ENCODE measurements at regions of chr12 and their contacts with region 1.

Region 1: GRCh38 chr12:94560431-94561221 is 89.7 kb downstream of the TMCC3 start:
- DNase-seq: peak; percentile 61
- H3K4me3 ChIP-seq: no peak overlapping the region
- H3K27ac ChIP-seq: peak overlapping the region in 3 of 4 donors; percentile 35 to 53 (median 46)
- H3K4me1 ChIP-seq: peaks cover 0 to 46% (median 22%) of the 10 kb centered on the region in 4 donors
- H3K27me3 ChIP-seq: no peaks in the 10 kb centered on the region
- CTCF ChIP-seq: no peak
- EP300 ChIP-seq: no peak
- POLR2A ChIP-seq: no peak

Region 2: DNA sequence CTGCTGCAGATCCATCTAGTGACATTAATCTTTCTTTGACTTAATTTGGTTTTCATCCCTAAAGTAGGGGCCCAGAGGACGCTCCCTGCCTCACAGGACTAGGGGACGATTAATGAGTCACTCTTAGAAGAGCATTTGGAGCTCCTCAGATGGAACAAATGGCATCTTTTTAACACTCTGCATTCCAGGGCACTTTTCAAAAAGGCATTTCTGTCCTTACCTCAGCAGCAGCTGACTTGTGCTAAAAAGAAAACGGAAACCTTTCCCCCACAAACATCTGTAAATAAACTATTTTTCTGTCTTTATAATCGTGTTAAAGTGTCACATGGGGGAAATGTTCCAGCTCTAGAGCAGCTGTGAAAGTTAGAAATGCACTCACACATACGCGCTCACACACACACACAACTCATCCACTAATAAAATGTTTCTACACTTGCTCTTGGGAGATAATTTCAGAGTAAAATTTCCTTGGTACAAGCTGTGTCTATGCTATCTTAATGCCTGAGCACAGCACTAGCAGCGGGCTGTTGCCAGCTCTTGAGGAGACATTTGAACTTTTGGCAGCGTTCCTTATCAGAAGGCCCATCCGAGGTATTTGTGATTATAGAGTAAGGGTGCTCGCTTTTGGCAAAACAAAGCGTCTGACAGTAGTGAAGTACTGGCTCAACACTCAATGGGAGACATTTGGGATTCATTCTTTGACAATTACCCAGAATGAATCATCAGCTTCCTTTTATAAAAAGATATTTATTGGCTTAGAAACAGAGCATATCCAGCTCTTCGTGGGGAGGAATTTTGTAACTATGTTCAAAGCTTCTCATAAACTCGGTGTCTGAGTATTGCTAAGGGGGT is 270.9 kb before region 1 on chr12:
- in situ Hi-C with region 1: no loop called
- intact Hi-C with region 1: no loop called
- DNase-seq: no peak
- H3K4me3 ChIP-seq: no peak overlapping the region
- H3K27ac ChIP-seq: peak overlapping the region; percentile 8 to 45 (median 37)
- H3K4me1 ChIP-seq: peaks cover 4 to 22% (median 13%) of the 10 kb centered on the region in 4 donors
- H3K27me3 ChIP-seq: no peaks in the 10 kb centered on the region
- CTCF ChIP-seq: no peak
- EP300 ChIP-seq: no peak
- POLR2A ChIP-seq: no peak

Region 3: DNA sequence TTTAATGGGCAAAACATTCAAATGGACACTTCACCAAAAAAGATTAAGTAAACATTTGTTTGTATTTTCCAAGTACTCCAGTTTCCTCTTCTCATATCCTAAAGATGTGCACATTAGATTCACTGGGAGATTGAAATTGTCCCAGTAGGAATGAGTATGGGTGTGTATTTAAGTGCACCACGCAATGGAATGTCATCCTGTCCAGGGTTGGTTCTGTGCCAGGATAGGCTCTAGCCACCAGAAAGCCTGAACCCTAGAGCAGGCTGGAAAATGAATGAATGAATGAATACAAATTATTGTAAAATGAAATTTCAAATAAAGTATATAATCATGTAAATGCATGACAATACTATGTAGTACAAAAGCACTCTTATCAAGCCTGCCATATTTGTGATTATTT is 115.0 kb before region 1 on chr12:
- in situ Hi-C with region 1: no loop called
- intact Hi-C with region 1: no loop called
- DNase-seq: no peak
- H3K4me3 ChIP-seq: no peak overlapping the region
- H3K27ac ChIP-seq: no peak overlapping the region
- H3K4me1 ChIP-seq: no peaks in the 10 kb centered on the region
- H3K27me3 ChIP-seq: no peaks in the 10 kb centered on the region
- CTCF ChIP-seq: no peak
- EP300 ChIP-seq: no peak
- POLR2A ChIP-seq: no peak

Region 4: DNA sequence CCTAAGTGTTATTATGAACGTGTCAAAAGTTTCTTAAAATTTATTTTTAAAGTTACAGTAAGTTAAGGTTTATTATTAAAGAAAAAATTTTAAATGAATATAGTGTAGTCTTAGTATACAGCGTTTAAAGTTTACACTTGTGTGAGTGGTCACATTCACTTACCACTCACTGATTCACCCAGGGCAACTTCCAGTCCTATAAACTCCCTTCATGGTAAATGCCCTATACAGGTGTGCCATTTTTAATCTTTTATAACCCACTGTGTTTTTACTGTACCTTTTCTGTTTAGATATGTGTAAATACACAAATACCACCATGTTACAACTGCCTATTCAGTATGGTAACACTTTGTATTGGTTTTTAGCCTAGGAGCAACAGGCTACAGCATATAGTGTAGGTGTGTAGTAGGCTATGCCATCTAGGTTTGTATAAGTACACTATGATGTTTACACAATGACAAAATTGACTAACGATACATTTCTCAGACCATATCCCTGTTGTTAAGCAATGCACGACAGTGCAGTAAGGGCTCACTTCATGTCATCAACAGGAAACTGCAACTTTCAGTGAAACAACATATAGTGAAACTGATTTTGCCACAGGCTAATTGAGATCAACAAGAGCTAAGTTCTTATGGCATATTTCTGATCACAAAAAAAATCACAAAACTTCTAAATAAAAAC is 201.8 kb after region 1 on chr12:
- in situ Hi-C with region 1: loop called in 1 of 4 experiments (anchors 25 kb)
- intact Hi-C with region 1: no loop called
- DNase-seq: no peak
- H3K4me3 ChIP-seq: no peak overlapping the region
- H3K27ac ChIP-seq: peak overlapping the region; percentile 3 to 50 (median 16)
- H3K4me1 ChIP-seq: peaks cover 0 to 7% (median 2%) of the 10 kb centered on the region in 4 donors
- H3K27me3 ChIP-seq: no peaks in the 10 kb centered on the region
- CTCF ChIP-seq: no peak
- EP300 ChIP-seq: no peak
- POLR2A ChIP-seq: no peak